Body of pancreas (tissue), 4 donors: ENCODE measurements at regions of chr22 and their contacts with region 1.

Region 1: DNA sequence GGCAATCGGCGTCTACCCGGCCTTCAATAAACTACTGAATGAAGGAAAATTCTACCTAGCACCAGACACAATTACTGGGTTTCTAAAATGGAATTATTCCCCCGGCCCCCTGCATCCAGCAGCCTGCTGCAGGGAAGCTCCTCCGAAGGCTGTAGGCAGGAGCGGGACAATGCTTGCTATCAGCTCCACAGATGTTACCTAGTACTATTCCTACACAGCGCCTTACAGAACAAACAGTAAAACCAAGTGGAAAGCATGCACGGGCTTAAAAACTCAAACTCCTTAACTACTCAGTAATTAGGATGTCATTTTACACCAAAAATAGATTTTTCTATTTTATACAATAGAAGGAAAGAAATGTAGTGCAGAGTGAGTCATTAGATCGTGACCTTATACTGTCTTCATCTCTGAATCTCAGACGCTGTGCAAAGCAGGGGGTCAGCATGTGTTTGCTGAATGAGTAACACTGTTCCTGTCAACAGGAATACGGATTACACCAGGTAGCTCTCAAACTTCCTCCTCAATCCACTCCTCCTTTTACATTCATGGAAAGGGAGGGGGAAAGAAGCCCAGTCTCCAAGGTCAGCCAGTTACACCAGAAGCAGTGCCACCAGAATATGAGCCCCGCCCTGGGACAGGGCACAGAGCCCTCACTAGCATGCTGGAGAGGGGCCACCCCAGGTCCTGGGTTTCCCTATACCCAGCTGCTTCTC is 74.9 kb downstream of the PACSIN2 start:
- DNase-seq: peak; percentile 81 to 90 (median 87)
- ATAC-seq: peak; percentile 93
- H3K4me3 ChIP-seq: no peak overlapping the region
- H3K27ac ChIP-seq: peak overlapping the region; percentile 81 to 92 (median 90)
- H3K4me1 ChIP-seq: peaks cover 86% of the 10 kb centered on the region
- H3K27me3 ChIP-seq: no peaks in the 10 kb centered on the region
- CTCF ChIP-seq: no peak
- POLR2A ChIP-seq: peak in 1 of 3 donors; percentile 35

Region 2: DNA sequence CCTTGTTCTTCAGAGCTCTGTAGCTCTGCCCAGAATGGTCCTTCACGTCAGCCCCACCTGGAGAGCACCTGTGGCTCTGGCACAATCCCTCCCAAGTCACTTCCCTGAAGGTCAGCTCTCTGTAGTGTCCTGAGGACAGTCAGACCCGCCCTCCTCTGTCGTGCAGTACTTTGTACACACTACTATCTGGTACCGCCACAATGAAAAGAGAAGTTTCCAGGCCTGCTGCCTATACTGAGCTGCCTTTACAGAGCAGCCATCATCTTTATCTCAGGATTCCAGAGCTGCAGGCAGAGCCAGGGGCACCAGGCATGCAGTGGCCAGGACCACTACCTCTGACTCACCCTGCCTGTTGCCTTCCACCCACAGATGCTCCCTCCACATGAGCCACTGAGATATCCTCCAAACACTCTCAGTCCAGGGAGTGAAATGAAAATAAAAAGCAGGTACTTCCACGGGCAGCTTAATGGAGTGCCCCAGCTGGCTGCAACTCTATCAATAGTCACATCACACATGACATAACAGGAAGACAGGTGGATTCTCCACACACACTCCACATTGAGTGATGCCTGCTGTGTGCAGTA is 67.5 kb after region 1 on chr22:
- intact Hi-C with region 1: loop called (anchors 10 kb)
- DNase-seq: peak; percentile 87 to 96 (median 94)
- ATAC-seq: peak; percentile 90
- H3K4me3 ChIP-seq: no peak overlapping the region
- H3K27ac ChIP-seq: peak overlapping the region; percentile 85 to 92 (median 86)
- H3K4me1 ChIP-seq: peaks cover 97% of the 10 kb centered on the region
- H3K27me3 ChIP-seq: no peaks in the 10 kb centered on the region
- CTCF ChIP-seq: no peak
- POLR2A ChIP-seq: peak in 2 of 3 donors; percentile 57 to 71

Region 3: GRCh38 chr22:43363315-43364168 is 423.4 kb after region 1 on chr22:
- intact Hi-C with region 1: no loop called
- DNase-seq: no peak
- ATAC-seq: no peak
- H3K4me3 ChIP-seq: no peak overlapping the region
- H3K27ac ChIP-seq: no peak overlapping the region
- H3K4me1 ChIP-seq: no peaks in the 10 kb centered on the region
- H3K27me3 ChIP-seq: no peaks in the 10 kb centered on the region
- CTCF ChIP-seq: no peak
- POLR2A ChIP-seq: no peak